Activated naive CD8-positive, alpha-beta T cell treated with anti-CD3 and anti-CD28 coated beads, Interleukin-2, amount 10 ng/mL, durations not matched to agents 7 days and 5 days (primary cell): ENCODE measurements at regions of chr12 and their contacts with region 1.

Region 1: DNA sequence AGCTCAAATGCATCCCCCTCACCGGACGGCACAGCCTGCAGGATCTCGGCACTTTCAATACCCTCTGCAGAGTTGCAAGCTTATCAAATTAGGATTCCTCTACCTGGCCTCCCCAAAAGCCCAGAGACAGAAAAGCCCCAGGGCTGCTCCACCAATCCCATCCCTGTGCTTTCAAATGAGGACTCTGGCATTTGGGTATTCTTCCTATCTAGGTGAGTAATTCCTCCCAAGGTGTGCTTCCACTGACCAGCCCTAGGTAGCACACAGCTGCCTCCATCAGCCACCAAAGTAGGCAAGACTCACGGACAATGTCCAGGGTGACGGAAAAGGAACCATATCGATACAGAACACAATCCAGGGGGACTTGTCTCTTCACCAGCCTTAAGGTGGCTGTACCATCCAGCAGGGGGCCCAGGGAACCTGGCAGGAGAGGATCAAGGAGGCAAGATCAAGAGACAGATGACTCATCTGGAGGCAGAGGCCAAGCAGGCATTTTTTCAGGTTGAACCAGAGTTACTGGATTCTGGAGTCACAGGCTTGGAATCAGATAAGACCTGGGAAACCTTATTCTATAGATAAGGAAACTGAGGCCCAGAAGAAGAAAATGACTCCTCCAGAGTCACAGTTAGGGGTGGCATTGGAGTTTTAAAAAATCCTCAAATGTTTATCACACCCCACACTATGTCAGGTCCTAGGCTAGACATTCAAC is 9.9 kb downstream of the PMEL start:
- DNase-seq: peak; percentile 48
- ATAC-seq: peak; percentile 69
- H3K4me3 Mint-ChIP-seq: no peak overlapping the region
- H3K27ac Mint-ChIP-seq: peak overlapping the region; percentile 2
- H3K4me1 Mint-ChIP-seq: peaks cover 13% of the 10 kb centered on the region
- H3K27me3 Mint-ChIP-seq: no peaks in the 10 kb centered on the region

Region 2: DNA sequence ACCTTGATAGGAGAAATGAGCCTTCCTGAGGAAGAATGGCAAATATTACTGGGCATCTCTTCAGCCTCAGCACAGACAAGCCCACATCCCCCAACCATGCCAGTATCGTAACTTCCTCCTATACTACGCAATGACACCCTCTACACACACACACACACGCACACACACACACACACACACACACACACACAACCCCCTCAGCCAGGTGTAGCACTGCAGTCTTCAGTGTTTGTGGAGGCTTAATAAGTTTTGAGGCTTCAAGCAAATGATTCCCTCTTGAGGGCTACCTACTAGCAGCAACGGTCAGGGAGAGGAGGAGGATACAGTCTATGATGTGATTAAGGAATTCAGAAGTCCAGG is 23.4 kb before region 1 on chr12:
- POLR2A ChIA-PET with region 1: interaction called, 16 read pairs
- DNase-seq: no peak
- ATAC-seq: no peak
- H3K4me3 Mint-ChIP-seq: peak overlapping the region; percentile 98
- H3K27ac Mint-ChIP-seq: peak overlapping the region; percentile 98
- H3K4me1 Mint-ChIP-seq: peaks cover 49% of the 10 kb centered on the region
- H3K27me3 Mint-ChIP-seq: no peaks in the 10 kb centered on the region

Region 3: GRCh38 chr12:55966408-55967281 is 10.7 kb after region 1 on chr12 and contains the start of gene CDK2:
- POLR2A ChIA-PET with region 1: interaction called, 21 read pairs
- DNase-seq: peak; percentile 95
- ATAC-seq: peak; percentile 94
- H3K4me3 Mint-ChIP-seq: peak within 1 kb of the TSS; percentile 99
- H3K27ac Mint-ChIP-seq: peak within 1 kb of the TSS; percentile 93
- H3K4me1 Mint-ChIP-seq: peaks cover 28% of the 10 kb centered on the region
- H3K27me3 Mint-ChIP-seq: no peaks in the 10 kb centered on the region
- total RNA-seq, gene CDK2: 117 to 125 TPM